Activated CD4-positive, alpha-beta memory T cell treated with anti-CD3 and anti-CD28 coated beads, Interleukin-2, amount 10 ng/mL, durations not matched to agents 7 days and 5 days (primary cell): ENCODE measurements at regions of chr1 and their contacts with region 1.

Region 1: GRCh38 chr1:23559136-23559984 is at the start of gene ID3:
- DNase-seq: peak; percentile 94
- H3K4me3 Mint-ChIP-seq: peak within 1 kb of the TSS; percentile 84
- H3K27ac Mint-ChIP-seq: peak within 1 kb of the TSS; percentile 73
- H3K4me1 Mint-ChIP-seq: peaks cover 59% of the 10 kb centered on the region
- H3K27me3 Mint-ChIP-seq: peaks cover 52% of the 10 kb centered on the region
- total RNA-seq, gene ID3: 14.7 to 14.8 TPM

Region 2: GRCh38 chr1:23237508-23237907 is 321.9 kb before region 1 on chr1:
- CTCF ChIA-PET with region 1: no interaction called
- POLR2A ChIA-PET with region 1: no interaction called
- DNase-seq: no peak
- H3K4me3 Mint-ChIP-seq: no peak overlapping the region
- H3K27ac Mint-ChIP-seq: no peak overlapping the region
- H3K4me1 Mint-ChIP-seq: no peaks in the 10 kb centered on the region
- H3K27me3 Mint-ChIP-seq: peaks cover 2% of the 10 kb centered on the region

Region 3: GRCh38 chr1:23524716-23525401 is 34.5 kb before region 1 on chr1:
- CTCF ChIA-PET with region 1: interaction called, 12 read pairs
- POLR2A ChIA-PET with region 1: interaction called, 55 read pairs
- DNase-seq: peak; percentile 70
- H3K4me3 Mint-ChIP-seq: peak overlapping the region; percentile 99
- H3K27ac Mint-ChIP-seq: peak overlapping the region; percentile 97
- H3K4me1 Mint-ChIP-seq: peaks cover 72% of the 10 kb centered on the region
- H3K27me3 Mint-ChIP-seq: no peaks in the 10 kb centered on the region

Region 4: GRCh38 chr1:23577056-23578004 is 18.0 kb after region 1 on chr1:
- CTCF ChIA-PET with region 1: interaction called, 7 read pairs
- POLR2A ChIA-PET with region 1: interaction called, 19 read pairs
- DNase-seq: peak; percentile 51
- H3K4me3 Mint-ChIP-seq: no peak overlapping the region
- H3K27ac Mint-ChIP-seq: peak overlapping the region; percentile 69
- H3K4me1 Mint-ChIP-seq: peaks cover 23% of the 10 kb centered on the region
- H3K27me3 Mint-ChIP-seq: peaks cover 12% of the 10 kb centered on the region

Region 5: DNA sequence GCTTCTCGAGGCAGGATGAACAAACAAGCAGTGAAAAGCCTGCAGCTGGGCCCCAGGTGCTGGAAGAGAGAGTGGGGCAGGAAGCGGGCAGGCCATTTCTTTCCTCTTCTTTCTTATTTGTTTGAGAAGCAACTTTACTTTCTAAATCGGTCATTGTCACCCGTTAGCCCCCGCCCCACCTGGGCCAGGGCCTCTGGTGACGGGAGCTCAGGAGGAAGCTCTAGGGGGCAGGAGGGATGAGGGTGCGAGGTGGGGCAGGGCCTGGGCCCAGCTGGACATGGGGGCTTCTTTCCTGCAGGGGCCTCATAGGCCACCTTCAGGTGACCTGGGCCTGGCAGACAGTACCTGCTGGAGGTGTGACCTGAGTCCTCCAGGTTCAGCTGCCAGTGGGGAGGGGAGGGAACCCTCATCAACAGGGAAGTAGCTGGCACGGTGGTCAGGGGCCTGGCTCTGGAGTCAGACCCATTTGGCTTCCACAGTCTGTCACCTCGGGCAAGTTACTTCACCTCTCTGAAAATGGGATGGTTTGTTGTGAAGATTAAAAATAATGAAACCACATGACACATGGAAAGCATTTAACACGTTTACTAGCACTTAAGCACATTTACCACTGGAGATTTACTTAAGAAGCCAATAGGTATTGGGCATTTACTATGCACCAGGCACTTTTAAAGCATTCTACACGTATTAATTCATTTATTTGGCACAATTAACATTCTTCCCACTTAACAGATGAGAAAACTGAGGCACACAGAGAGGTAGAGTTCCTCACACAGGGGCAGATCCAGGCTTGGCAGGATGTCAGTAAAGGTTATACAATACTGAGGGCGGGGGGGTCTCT is 54.1 kb after region 1 on chr1:
- CTCF ChIA-PET with region 1: interaction called, 3 read pairs
- POLR2A ChIA-PET with region 1: interaction called, 34 read pairs
- DNase-seq: peak; percentile 70
- H3K4me3 Mint-ChIP-seq: peak overlapping the region; percentile 2
- H3K27ac Mint-ChIP-seq: peak overlapping the region; percentile 82
- H3K4me1 Mint-ChIP-seq: peaks cover 61% of the 10 kb centered on the region
- H3K27me3 Mint-ChIP-seq: peaks cover 4% of the 10 kb centered on the region

Region 6: DNA sequence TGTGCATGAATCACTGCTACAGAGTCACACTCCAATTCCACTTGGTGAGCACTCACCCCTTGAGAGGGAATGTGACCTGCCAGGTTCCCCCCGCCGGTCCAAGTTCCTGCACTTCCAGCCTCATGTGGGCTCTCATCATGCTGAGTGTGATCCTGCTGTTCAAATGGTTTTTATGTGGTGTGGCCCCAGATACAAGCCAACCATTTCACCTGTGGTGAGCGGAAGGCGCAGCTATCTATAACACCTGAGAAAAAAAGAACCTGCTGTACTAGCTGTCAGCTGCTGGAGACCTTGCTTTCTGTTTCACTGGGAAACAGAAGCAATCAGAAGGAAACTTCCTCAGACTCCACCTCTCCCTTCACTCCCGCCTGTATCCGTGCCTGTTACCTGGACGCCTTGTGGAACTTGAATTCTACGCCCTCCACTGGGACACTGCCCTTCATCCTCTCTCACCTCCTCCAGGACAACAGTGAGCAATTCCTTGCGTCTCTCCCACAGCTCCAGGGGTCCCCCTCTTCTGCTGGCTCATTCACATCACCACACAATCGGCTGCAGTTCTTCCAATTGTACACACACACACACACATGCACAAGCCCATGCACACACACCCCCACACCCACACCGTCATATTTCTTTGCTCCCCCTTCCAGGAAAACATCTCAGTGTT is 67.8 kb after region 1 on chr1:
- CTCF ChIA-PET with region 1: interaction called, 545 read pairs
- POLR2A ChIA-PET with region 1: interaction called, 63 read pairs
- DNase-seq: no peak
- H3K4me3 Mint-ChIP-seq: peak overlapping the region; percentile 78
- H3K27ac Mint-ChIP-seq: peak overlapping the region; percentile 17
- H3K4me1 Mint-ChIP-seq: peaks cover 27% of the 10 kb centered on the region
- H3K27me3 Mint-ChIP-seq: peaks cover 3% of the 10 kb centered on the region

Region 7: GRCh38 chr1:23673086-23673813 is 113.9 kb after region 1 on chr1:
- CTCF ChIA-PET with region 1: no interaction called
- POLR2A ChIA-PET with region 1: no interaction called
- DNase-seq: peak; percentile 38
- H3K4me3 Mint-ChIP-seq: no peak overlapping the region
- H3K27ac Mint-ChIP-seq: no peak overlapping the region
- H3K4me1 Mint-ChIP-seq: no peaks in the 10 kb centered on the region
- H3K27me3 Mint-ChIP-seq: peaks cover 10% of the 10 kb centered on the region

Region 8: GRCh38 chr1:23875382-23875781 is 316.0 kb after region 1 on chr1:
- CTCF ChIA-PET with region 1: no interaction called
- POLR2A ChIA-PET with region 1: no interaction called
- DNase-seq: no peak
- H3K4me3 Mint-ChIP-seq: no peak overlapping the region
- H3K27ac Mint-ChIP-seq: no peak overlapping the region
- H3K4me1 Mint-ChIP-seq: no peaks in the 10 kb centered on the region
- H3K27me3 Mint-ChIP-seq: peaks cover 6% of the 10 kb centered on the region

Region 9: GRCh38 chr1:24047101-24047459 is 487.7 kb after region 1 on chr1:
- CTCF ChIA-PET with region 1: no interaction called
- POLR2A ChIA-PET with region 1: no interaction called
- DNase-seq: no peak
- H3K4me3 Mint-ChIP-seq: no peak overlapping the region
- H3K27ac Mint-ChIP-seq: no peak overlapping the region
- H3K4me1 Mint-ChIP-seq: no peaks in the 10 kb centered on the region
- H3K27me3 Mint-ChIP-seq: peaks cover 5% of the 10 kb centered on the region